ENCODE measurements at regions of chr11 and their contacts with region 1.

Region 1: DNA sequence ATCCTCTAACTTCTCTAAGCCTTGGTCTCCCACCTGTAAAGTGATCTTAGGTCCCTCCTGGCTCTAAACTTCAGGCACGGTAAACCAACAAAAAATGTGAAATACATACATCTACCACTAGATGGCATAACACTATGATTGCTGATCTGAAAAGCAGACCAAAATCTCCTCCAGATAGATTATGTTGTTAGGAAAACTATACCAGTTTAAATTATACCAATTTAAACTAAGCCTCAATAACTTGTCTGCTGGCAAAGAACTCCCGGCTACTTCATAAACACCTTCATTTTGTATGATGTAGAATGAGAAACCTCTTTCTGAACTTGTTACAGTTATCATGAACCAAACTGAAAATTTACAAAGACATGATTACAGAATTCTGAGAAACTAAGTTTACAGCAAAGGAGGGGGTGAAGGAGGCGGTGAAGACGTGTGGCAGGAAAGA is 85.9 kb downstream of the SBF2 start:
- DNase-seq: no peak
- H3K4me3 ChIP-seq: no peak overlapping the region
- H3K27ac ChIP-seq: no peak overlapping the region
- H3K4me1 ChIP-seq: peaks cover 0 to 4% (median 0%) of the 10 kb centered on the region in 4 donors
- H3K27me3 ChIP-seq: no peaks in the 10 kb centered on the region
- CTCF ChIP-seq: peak; percentile 66 to 79 (median 72)
- EP300 ChIP-seq: no peak
- POLR2A ChIP-seq: no peak

Region 2: GRCh38 chr11:10307442-10308207 is 99.5 kb after region 1 on chr11:
- in situ Hi-C with region 1: loop called in 3 of 4 experiments (anchors 10 kb)
- intact Hi-C with region 1: loop called (anchors 5 kb)
- DNase-seq: peak; percentile 89
- H3K4me3 ChIP-seq: peak overlapping the region; percentile 48 to 74 (median 60)
- H3K27ac ChIP-seq: peak overlapping the region; percentile 90 to 96 (median 92)
- H3K4me1 ChIP-seq: peaks cover 13 to 60% (median 41%) of the 10 kb centered on the region in 4 donors
- H3K27me3 ChIP-seq: peaks cover 3% of the 10 kb centered on the region
- CTCF ChIP-seq: peak; percentile 98 to 100 (median 100)
- EP300 ChIP-seq: no peak
- POLR2A ChIP-seq: peak; percentile 53

Region 3: GRCh38 chr11:10314199-10315072 is 106.3 kb after region 1 on chr11:
- in situ Hi-C with region 1: loop called in 3 of 4 experiments (anchors 10 kb)
- intact Hi-C with region 1: loop called (anchors 5 kb)
- DNase-seq: no peak
- H3K4me3 ChIP-seq: no peak overlapping the region
- H3K27ac ChIP-seq: no peak overlapping the region
- H3K4me1 ChIP-seq: peaks cover 0 to 22% (median 8%) of the 10 kb centered on the region in 4 donors
- H3K27me3 ChIP-seq: no peaks in the 10 kb centered on the region
- CTCF ChIP-seq: no peak
- EP300 ChIP-seq: no peak
- POLR2A ChIP-seq: no peak

Region 4: GRCh38 chr11:10366568-10367370 is 158.6 kb after region 1 on chr11:
- in situ Hi-C with region 1: loop called in 1 of 4 experiments (anchors 25 kb)
- intact Hi-C with region 1: no loop called
- DNase-seq: peak; percentile 81
- H3K4me3 ChIP-seq: no peak overlapping the region
- H3K27ac ChIP-seq: peak overlapping the region in 3 of 4 donors; percentile 27 to 54 (median 47)
- H3K4me1 ChIP-seq: peaks cover 0 to 14% (median 5%) of the 10 kb centered on the region in 4 donors
- H3K27me3 ChIP-seq: no peaks in the 10 kb centered on the region
- CTCF ChIP-seq: peak; percentile 73 to 87 (median 82)
- EP300 ChIP-seq: no peak
- POLR2A ChIP-seq: no peak

Measured in transverse colon (tissue), 4 donors.